Ascending aorta (tissue), 2 donors: ENCODE measurements at regions of chr1 and their contacts with region 1.

Region 1: GRCh38 chr1:44730741-44731512 is at the start of gene RNU5D-1:
- DNase-seq: peak; percentile 81 to 98
- H3K4me3 ChIP-seq: peak within 1 kb of the TSS in 1 of 2 donors; percentile 31
- H3K27ac ChIP-seq: peak within 1 kb of the TSS; percentile 84 to 92
- H3K4me1 ChIP-seq: peaks cover 5 to 15% of the 10 kb centered on the region in 2 donors
- H3K27me3 ChIP-seq: no peaks in the 10 kb centered on the region
- CTCF ChIP-seq: peak; percentile 70 to 76 (median 72)
- total RNA-seq, gene RNU5D-1: not detected

Region 2: DNA sequence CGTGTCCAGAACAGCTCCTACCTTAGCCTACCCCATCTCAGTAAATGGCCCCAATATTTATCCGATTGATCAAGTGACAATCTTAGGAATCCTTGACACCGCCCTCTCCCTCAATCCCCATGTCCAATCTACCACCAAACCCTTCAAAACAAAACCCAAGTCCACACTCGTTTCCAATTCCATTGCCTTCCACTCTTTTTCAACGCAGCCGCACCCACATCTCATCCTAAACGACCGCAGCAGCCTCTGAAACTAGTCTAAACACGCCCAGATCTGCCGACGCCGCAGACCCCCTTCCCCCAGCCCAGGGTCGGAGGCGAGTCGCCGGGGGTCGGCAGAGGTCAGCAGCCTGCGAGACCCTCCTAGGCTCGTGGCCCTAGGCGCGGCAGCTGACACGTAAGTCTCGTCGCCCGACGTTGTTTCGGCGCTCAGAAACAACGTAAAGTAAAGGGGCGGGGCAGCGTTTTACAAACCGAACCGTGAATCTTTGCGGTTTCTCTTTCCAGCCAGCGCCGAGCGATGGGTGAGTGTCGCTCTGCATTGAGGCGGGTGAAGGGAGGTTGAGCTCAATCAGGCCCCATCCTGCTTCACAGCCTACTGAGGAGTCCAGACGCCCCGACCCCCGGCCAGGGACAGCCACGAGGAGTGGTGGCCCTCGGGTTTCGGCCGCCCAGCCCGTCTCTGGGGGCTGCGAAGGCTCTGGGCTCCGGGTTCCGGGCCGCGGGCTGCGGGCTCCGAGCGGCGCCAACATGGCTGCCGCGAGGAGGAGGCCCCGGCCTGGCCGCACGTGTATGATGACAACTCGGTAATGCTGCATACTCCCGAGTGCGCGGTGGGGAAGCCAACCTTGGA is 44.4 kb after region 1 on chr1 and contains the start of gene RPS8:
- intact Hi-C with region 1: loop called (anchors 2 kb)
- DNase-seq: peak; percentile 56 to 96
- H3K4me3 ChIP-seq: peak within 1 kb of the TSS; percentile 60 to 78
- H3K27ac ChIP-seq: peak within 1 kb of the TSS; percentile 89 to 93
- H3K4me1 ChIP-seq: peaks cover 8 to 9% of the 10 kb centered on the region in 2 donors
- H3K27me3 ChIP-seq: no peaks in the 10 kb centered on the region
- CTCF ChIP-seq: no peak
- total RNA-seq, gene RPS8: 1,693 TPM

Region 3: GRCh38 chr1:44985747-44986359 is 254.9 kb after region 1 on chr1:
- intact Hi-C with region 1: loop called (anchors 5 kb)
- DNase-seq: no peak
- H3K4me3 ChIP-seq: peak overlapping the region; percentile 81 to 90
- H3K27ac ChIP-seq: peak overlapping the region; percentile 50 to 54
- H3K4me1 ChIP-seq: peaks cover 5 to 25% of the 10 kb centered on the region in 2 donors
- H3K27me3 ChIP-seq: no peaks in the 10 kb centered on the region
- CTCF ChIP-seq: no peak

Region 4: GRCh38 chr1:45583264-45583665 is 852.3 kb after region 1 on chr1:
- intact Hi-C with region 1: loop called (anchors 5 kb)
- DNase-seq: peak; percentile 87 to 97
- H3K4me3 ChIP-seq: peak overlapping the region; percentile 84 to 89
- H3K27ac ChIP-seq: peak overlapping the region; percentile 89 to 90
- H3K4me1 ChIP-seq: peaks cover 0 to 14% of the 10 kb centered on the region in 2 donors
- H3K27me3 ChIP-seq: no peaks in the 10 kb centered on the region
- CTCF ChIP-seq: no peak